Motor neuron (in vitro differentiated cells): ENCODE measurements at regions of chr16 and their contacts with region 1.

Region 1: DNA sequence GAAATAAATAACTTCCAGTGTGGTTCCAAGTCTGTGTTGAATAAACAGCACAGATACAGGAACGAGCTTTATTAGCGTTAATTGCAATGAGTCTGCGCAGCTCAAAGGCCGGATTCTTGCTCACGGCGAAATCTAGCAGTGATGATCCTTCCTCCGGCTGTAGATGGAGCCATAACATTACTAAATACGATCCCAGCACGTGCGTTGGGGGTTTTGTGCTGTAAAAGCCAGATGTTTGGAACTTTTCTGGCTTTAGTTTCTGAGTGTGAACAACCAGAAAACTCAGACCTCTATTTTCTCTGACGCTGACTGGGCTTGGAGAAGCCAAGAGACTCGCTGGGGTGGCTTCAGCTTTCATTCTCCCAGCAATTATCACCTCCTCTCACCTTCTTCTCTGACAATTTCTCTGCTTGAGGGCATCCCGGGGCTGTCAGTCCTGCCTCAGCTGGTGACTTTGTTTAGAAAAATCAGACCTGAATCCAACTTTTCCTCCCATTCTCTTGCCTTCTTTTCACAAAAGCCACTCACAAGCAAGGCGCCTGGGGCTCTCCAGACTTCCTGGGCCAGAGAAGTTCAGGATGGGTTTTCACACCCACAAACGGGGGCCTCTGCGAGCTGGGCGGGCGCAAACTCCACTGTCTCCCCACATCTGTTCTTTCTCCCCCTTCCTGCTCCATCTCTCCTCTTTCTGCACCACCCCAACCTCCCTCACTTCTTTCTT is 47.1 kb upstream of the AKTIP start:
- ATAC-seq: peak; percentile 78 to 99 (median 87)
- H3K4me3 ChIP-seq: no peak overlapping the region
- H3K27ac ChIP-seq: no peak overlapping the region
- H3K4me1 ChIP-seq: peaks cover 9 to 16% of the 10 kb centered on the region in 2 donors

Region 2: GRCh38 chr16:53664724-53665345 is 114.7 kb after region 1 on chr16:
- in situ Hi-C with region 1: loop called in 1 of 9 experiments (anchors 25 kb)
- ATAC-seq: peak in 2 of 8 experiments; percentile 11 to 25
- H3K4me3 ChIP-seq: no peak overlapping the region
- H3K27ac ChIP-seq: no peak overlapping the region
- H3K4me1 ChIP-seq: peaks cover 0 to 9% of the 10 kb centered on the region in 2 donors

Region 3: GRCh38 chr16:53743149-53743566 is 193.0 kb after region 1 on chr16:
- in situ Hi-C with region 1: loop called in 1 of 9 experiments (anchors 25 kb)
- ATAC-seq: no peak
- H3K4me3 ChIP-seq: no peak overlapping the region
- H3K27ac ChIP-seq: no peak overlapping the region
- H3K4me1 ChIP-seq: peaks cover 20 to 38% of the 10 kb centered on the region in 2 donors

Region 4: DNA sequence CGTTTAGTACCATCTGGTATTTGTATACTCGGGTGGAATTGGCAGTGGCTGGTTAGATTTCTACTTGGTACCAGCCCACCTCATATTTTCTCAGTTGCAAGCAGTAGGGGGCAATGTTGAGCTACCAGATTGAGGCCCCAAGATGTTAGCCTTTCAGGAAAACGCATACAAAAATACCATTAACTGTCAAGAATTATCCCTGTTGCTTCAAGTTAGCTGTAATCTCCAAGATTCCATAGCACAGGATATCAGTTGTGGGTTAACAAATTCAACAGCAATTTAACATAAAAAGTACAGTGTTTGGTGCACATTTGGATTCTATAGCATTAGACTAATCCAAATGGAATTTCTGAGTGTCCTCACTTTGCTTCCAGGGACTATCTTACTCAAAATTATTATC is 342.0 kb after region 1 on chr16:
- in situ Hi-C with region 1: loop called in 1 of 9 experiments (anchors 25 kb)
- ATAC-seq: peak; percentile 49 to 78 (median 71)
- H3K4me3 ChIP-seq: no peak overlapping the region
- H3K27ac ChIP-seq: no peak overlapping the region
- H3K4me1 ChIP-seq: peaks cover 7 to 46% of the 10 kb centered on the region in 2 donors

Region 5: GRCh38 chr16:53913099-53913870 is 363.2 kb after region 1 on chr16:
- in situ Hi-C with region 1: no loop called
- ATAC-seq: peak; percentile 36 to 74 (median 55)
- H3K4me3 ChIP-seq: no peak overlapping the region
- H3K27ac ChIP-seq: no peak overlapping the region
- H3K4me1 ChIP-seq: peaks cover 34 to 48% of the 10 kb centered on the region in 2 donors